BJ (cell line): ENCODE measurements at regions of chr17 and their contacts with region 1.

Region 1: DNA sequence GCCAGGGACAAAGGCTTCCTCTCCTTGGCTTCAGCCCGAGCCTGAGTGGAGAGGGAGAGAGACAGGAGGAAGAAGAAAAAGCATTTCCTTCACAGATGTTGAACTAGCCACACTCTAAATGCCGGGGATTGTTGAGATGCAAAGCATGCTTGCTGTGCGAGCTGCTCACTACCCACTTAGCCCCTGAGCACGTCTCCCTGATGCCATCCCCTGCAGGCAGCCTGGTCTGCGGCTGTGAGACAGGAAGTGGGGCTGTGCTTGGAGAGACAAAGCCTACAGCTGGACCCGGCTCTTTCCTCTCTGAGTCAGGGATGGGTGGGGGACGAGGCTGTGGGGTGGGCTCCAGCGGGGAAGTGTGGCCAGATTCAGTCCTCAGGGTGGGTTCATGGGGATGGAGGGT is 13.7 kb downstream of the WNT9B start:
- DNase-seq: peak; percentile 58
- H3K4me3 ChIP-seq: no peak overlapping the region
- H3K27me3 ChIP-seq: peaks cover 6% of the 10 kb centered on the region
- CTCF ChIP-seq: 0 out of 2 replicates have a peak, but pooled peaks have one; percentile 6

Region 2: DNA sequence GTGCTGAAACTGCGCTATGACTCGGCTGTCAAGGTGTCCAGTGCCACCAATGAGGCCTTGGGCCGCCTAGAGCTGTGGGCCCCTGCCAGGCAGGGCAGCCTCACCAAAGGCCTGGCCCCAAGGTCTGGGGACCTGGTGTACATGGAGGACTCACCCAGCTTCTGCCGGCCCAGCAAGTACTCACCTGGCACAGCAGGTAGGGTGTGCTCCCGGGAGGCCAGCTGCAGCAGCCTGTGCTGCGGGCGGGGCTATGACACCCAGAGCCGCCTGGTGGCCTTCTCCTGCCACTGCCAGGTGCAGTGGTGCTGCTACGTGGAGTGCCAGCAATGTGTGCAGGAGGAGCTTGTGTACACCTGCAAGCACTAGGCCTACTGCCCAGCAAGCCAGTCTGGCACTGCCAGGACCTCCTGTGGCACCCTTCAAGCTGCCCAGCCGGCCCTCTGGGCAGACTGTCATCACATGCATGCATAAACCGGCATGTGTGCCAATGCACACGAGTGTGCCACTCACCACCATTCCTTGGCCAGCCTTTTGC is 11.3 kb after region 1 on chr17:
- CTCF ChIA-PET with region 1: interaction called, 13 read pairs
- POLR2A ChIA-PET with region 1: no interaction called
- DNase-seq: no peak
- H3K4me3 ChIP-seq: no peak overlapping the region
- H3K27me3 ChIP-seq: peaks cover 8% of the 10 kb centered on the region
- CTCF ChIP-seq: peak; percentile 41; the same call in 1 of the 2 replicates

Region 3: DNA sequence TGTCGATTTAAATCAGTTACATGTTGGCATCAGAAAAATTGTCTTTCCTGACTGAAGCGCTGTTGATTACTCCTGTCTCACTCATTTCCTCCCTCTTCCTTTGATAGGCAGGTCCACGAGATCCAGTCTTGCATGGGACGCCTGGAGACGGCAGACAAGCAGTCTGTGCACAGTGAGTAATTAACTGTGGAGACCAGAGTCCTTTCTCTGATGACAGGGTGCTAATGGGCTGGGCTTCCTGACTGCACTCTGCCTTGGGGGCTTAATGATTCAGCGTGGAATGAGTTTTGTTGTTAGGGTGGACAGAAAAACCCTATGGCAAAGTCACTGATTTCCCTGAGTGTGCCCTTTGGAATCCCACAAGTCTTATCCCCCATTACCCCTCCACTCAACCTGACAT is 64.3 kb after region 1 on chr17:
- CTCF ChIA-PET with region 1: no interaction called
- POLR2A ChIA-PET with region 1: no interaction called
- DNase-seq: peak; percentile 39
- H3K4me3 ChIP-seq: no peak overlapping the region
- H3K27me3 ChIP-seq: no peaks in the 10 kb centered on the region
- CTCF ChIP-seq: no peak